Activated CD4-positive, alpha-beta T cell treated with anti-CD3 and anti-CD28 coated beads, Interleukin-2, amount 10 ng/mL, durations not matched to agents 24 days and 14 days (primary cell): ENCODE measurements at regions of chr5 and their contacts with region 1.

Region 1: DNA sequence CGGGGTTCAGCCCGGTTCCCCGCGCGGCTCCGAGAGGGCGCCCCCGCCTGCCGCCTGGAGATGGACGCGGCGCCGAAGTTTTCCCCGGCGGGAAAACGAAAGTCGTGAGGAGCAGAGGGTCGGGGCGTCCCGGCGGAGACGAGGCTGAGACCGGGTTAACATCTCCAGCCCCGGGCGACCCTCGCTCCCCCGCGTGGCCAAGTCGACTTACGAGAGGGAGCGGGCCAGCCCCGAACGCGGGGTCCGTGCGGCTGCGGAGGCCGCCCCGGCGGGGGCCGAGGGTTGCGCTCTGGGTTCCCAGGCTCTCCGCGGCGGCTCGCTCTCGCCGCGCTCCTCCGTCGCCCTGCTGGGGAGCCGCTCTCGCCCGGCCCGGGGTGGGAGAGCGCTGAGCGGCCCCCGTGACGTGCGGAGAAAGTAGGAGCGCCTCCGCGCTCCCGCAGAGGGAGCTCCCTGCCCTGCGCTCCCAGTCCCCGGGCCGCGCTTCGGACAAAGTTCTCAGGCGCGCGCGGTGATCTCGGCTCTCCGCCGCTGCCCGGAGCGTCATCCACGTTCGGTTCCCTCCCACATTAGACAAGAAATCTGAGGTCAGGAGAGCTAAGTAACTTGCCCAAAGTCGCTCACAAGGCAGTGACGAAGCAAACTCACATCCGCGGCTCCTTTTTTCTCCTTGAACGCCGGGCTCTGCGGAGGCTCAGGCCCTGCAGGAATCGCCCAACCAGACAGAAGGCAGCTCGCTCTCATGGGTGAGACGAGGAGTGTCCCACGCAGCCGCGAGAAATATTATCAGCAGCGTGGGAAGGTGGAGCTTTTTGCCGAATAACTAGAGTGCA is 1.2 kb upstream of the GCNT4 start:
- DNase-seq: peak; percentile 86
- H3K4me3 Mint-ChIP-seq: peak overlapping the region; percentile 87
- H3K27ac Mint-ChIP-seq: peak overlapping the region; percentile 46
- H3K4me1 Mint-ChIP-seq: peaks cover 53% of the 10 kb centered on the region
- H3K27me3 Mint-ChIP-seq: peaks cover 15% of the 10 kb centered on the region

Region 2: DNA sequence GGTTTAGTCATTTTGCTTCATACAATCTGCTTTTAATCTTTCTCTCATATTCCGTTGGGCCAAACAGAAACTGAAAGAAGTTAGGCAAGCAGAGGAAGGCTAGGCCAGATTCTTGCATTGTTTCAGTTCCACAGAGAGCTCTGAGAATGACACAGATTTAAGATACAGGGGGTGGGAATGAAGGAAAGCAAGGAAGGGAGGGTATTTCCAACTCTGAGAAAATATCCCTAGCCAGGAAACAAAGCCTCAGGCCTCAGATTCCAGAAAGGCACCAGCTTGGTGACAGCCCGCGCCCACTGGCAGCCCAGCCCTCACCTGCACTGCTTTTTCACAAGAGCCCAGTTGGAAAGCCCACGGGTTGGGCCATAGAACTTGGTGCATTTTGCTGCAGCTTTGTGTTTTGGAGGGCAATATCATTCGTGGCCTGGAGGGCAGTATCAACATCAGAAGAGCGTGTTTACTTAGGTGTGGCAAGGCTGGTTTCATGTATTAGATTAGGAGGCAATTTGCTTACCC is 476.5 kb before region 1 on chr5:
- intact Hi-C with region 1: loop called (anchors 5 kb)
- DNase-seq: peak; percentile 79
- H3K4me3 Mint-ChIP-seq: peak overlapping the region; percentile 50
- H3K27ac Mint-ChIP-seq: peak overlapping the region; percentile 30
- H3K4me1 Mint-ChIP-seq: peaks cover 35% of the 10 kb centered on the region
- H3K27me3 Mint-ChIP-seq: peaks cover 5% of the 10 kb centered on the region

Region 3: GRCh38 chr5:74934949-74935751 is 118.4 kb before region 1 on chr5:
- intact Hi-C with region 1: loop called (anchors 5 kb)
- DNase-seq: peak; percentile 79
- H3K4me3 Mint-ChIP-seq: peak overlapping the region; percentile 65
- H3K27ac Mint-ChIP-seq: peak overlapping the region; percentile 70
- H3K4me1 Mint-ChIP-seq: peaks cover 35% of the 10 kb centered on the region
- H3K27me3 Mint-ChIP-seq: peaks cover 4% of the 10 kb centered on the region

Region 4: DNA sequence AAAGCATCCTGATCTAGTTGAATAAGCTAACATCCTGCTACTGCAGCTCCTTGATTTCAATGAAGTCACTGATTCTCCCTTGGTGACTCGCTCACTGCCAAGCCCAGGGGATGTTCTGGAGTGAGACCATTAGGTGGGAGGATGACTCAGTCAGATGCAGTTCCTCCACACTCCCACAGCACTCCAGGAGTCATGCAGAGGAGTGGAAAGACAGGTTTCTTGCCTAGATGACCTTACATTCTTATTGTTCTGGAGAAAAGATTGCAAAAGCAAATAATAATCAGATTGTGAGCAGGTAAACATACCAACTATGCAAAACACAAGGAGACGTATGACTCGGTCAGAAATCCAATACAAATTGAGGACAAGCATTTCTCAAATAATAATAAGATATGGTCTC is 16.4 kb before region 1 on chr5:
- intact Hi-C with region 1: no loop called
- DNase-seq: no peak
- H3K4me3 Mint-ChIP-seq: no peak overlapping the region
- H3K27ac Mint-ChIP-seq: no peak overlapping the region
- H3K4me1 Mint-ChIP-seq: peaks cover 19% of the 10 kb centered on the region
- H3K27me3 Mint-ChIP-seq: no peaks in the 10 kb centered on the region

Region 5: GRCh38 chr5:75236322-75237316 is 183.1 kb after region 1 on chr5 and contains the start of gene ANKRD31:
- intact Hi-C with region 1: loop called (anchors 1 kb)
- DNase-seq: peak; percentile 97
- H3K4me3 Mint-ChIP-seq: peak within 1 kb of the TSS; percentile 96
- H3K27ac Mint-ChIP-seq: peak within 1 kb of the TSS; percentile 93
- H3K4me1 Mint-ChIP-seq: peaks cover 13% of the 10 kb centered on the region
- H3K27me3 Mint-ChIP-seq: no peaks in the 10 kb centered on the region
- total RNA-seq, gene ANKRD31: 0.33 and 0.47 TPM in 2 replicates

Region 6: DNA sequence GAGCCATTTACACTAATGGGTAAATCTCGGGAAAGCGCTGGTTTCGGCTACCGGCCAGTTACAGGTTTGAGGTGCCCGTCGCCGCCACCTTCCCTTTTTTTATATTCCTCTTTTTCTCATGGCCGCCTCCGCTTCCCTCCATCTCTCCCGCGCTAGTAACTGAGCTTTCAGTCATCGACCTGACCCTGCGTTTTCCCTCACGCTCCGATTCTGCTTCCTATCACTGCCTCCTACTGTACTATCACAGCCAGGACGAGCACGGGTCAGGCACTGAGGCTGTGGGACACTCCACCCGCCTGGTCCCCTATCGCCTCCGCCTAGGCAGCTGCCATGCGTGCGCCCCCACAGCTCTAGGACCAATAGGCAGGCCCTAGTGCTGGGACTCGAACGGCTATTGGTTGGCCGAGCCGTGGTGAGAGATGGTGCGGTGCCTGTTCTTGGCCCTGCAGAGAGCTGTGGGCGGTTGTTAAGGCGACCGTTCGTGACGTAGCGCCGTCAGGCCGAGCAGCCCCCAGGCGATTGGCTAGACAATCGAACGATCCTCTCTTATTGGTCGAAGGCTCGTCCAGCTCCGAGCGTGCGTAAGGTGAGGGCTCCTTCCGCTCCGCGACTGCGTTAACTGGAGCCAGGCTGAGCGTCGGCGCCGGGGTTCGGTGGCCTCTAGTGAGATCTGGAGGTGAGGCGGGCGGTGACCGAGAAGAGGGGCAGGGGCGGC is 283.3 kb after region 1 on chr5 and contains the start of gene HMGCR:
- intact Hi-C with region 1: loop called (anchors 2 kb)
- DNase-seq: peak; percentile 99
- H3K4me3 Mint-ChIP-seq: no peak within 1 kb of the TSS
- H3K27ac Mint-ChIP-seq: no peak within 1 kb of the TSS
- H3K4me1 Mint-ChIP-seq: peaks cover 34% of the 10 kb centered on the region
- H3K27me3 Mint-ChIP-seq: no peaks in the 10 kb centered on the region
- total RNA-seq, gene HMGCR: 99.9 and 112 TPM in 2 replicates

Region 7: DNA sequence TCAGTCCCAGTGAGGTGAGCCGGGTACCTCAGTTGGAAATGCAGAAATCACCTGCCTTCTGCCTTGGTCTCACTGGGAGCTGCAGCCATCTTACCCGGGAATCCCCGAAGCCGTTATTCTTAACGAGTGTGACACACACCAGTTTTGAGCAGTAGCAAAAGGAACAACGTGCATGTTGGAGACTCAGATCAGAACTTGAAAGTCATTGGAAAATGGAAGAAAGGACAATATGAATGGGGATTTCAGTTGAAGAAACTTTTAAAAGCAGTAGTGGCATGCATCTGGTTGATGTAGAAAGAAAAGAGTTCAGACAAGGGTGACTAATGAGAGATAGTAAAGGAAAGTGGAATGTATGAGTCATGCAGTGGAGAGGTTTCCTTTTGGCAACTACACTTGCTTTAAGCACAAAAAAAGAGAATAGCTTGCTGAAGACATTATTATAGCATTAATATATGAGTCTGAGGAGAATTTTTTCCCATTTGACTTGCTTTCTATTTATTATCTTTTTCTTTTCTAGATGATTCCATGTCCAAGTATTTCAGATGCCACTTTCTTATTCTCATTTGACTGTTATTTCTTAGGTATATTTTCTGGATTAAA is 513.3 kb after region 1 on chr5:
- intact Hi-C with region 1: loop called (anchors 2 kb)
- DNase-seq: peak; percentile 83
- H3K4me3 Mint-ChIP-seq: peak overlapping the region; percentile 84
- H3K27ac Mint-ChIP-seq: peak overlapping the region; percentile 98
- H3K4me1 Mint-ChIP-seq: peaks cover 39% of the 10 kb centered on the region
- H3K27me3 Mint-ChIP-seq: peaks cover 2% of the 10 kb centered on the region

Region 8: GRCh38 chr5:75717082-75717922 is 663.8 kb after region 1 on chr5 and contains the start of gene POC5:
- intact Hi-C with region 1: loop called (anchors 10 kb)
- DNase-seq: peak; percentile 99
- H3K4me3 Mint-ChIP-seq: peak within 1 kb of the TSS; percentile 100
- H3K27ac Mint-ChIP-seq: peak within 1 kb of the TSS; percentile 100
- H3K4me1 Mint-ChIP-seq: peaks cover 29% of the 10 kb centered on the region
- H3K27me3 Mint-ChIP-seq: peaks cover 7% of the 10 kb centered on the region
- total RNA-seq, gene POC5: 20.8 and 21.3 TPM in 2 replicates